ENCODE measurements at regions of chr14 and their contacts with region 1.

Region 1: DNA sequence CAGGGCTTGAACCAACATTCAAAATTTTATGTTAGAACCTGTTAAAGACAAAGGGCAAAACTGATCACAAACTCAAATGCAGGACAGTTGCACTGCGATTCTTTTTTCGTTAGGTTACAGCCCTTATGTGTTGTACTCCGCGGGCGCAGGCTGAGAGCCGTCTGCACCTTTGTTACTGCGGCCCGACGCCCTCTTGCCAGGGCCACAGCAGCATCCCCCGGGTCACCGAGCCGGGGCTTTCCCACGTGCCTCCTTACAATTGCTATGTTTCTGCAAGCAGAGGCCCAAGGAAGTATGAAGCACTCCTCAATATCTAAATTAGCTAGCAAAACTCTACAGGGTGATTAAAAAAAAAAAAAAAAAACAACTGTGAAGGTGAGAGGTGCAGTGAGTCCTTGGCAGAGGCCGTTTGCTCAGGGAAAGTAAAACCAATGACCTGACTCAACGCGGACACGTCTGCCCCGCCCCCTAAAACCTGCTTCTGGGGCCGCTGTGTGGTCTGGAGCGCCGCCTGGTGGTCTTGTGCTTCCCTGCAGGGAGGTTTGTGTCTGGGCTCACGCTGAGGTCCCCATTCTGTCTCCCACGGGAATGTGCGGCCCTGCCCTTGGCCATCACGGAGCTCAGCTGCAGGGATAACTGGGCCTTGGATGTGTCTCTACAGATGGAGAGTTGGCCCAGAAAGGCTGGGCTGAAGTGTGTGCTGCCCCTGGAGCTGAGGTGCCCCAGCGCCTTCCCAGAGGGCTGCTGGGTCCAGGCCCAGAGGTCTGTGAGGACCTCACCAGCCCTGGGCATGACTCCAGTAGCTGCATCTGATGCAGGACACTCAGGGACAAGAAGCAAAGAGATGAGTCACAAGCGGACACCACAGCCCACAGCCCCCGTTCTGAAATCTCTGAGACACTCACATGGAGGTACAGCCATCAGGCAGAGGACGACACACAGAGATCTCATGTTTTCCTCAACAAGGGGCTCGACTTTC is 418.5 kb downstream of the TMEM121 start:
- DNase-seq: no peak
- H3K4me3 ChIP-seq: no peak overlapping the region
- H3K27ac ChIP-seq: no peak overlapping the region
- H3K4me1 ChIP-seq: peaks cover 0 to 5% (median 2%) of the 10 kb centered on the region in 4 donors
- H3K27me3 ChIP-seq: peaks cover 0 to 20% (median 0%) of the 10 kb centered on the region in 4 donors
- CTCF ChIP-seq: peak; percentile 81 to 85 (median 85)
- EP300 ChIP-seq: no peak
- POLR2A ChIP-seq: no peak

Region 2: GRCh38 chr14:105562713-105563346 is 382.1 kb before region 1 on chr14:
- intact Hi-C with region 1: loop called (anchors 5 kb)
- DNase-seq: no peak
- H3K4me3 ChIP-seq: no peak overlapping the region
- H3K27ac ChIP-seq: no peak overlapping the region
- H3K4me1 ChIP-seq: peaks cover 0 to 5% (median 2%) of the 10 kb centered on the region in 4 donors
- H3K27me3 ChIP-seq: peaks cover 0 to 10% (median 0%) of the 10 kb centered on the region in 4 donors
- CTCF ChIP-seq: no peak
- EP300 ChIP-seq: no peak
- POLR2A ChIP-seq: no peak

Region 3: GRCh38 chr14:105682940-105683570 is 261.9 kb before region 1 on chr14:
- intact Hi-C with region 1: loop called (anchors 10 kb)
- DNase-seq: no peak
- H3K4me3 ChIP-seq: no peak overlapping the region
- H3K27ac ChIP-seq: no peak overlapping the region
- H3K4me1 ChIP-seq: peaks cover 0 to 4% (median 2%) of the 10 kb centered on the region in 4 donors
- H3K27me3 ChIP-seq: peaks cover 0 to 4% (median 0%) of the 10 kb centered on the region in 4 donors
- CTCF ChIP-seq: no peak
- EP300 ChIP-seq: no peak
- POLR2A ChIP-seq: no peak

Measured in esophagus muscularis mucosa (tissue), 4 donors.